Colonic mucosa (tissue), 4 donors: ENCODE measurements at regions of chr1 and their contacts with region 1.

Region 1: GRCh38 chr1:17661546-17662157 is 93.5 kb upstream of the ACTL8 start:
- DNase-seq: peak; percentile 53
- H3K4me3 ChIP-seq: no peak overlapping the region
- H3K27ac ChIP-seq: no peak overlapping the region
- H3K4me1 ChIP-seq: no peaks in the 10 kb centered on the region
- H3K27me3 ChIP-seq: no peaks in the 10 kb centered on the region
- CTCF ChIP-seq: peak; percentile 74

Region 2: GRCh38 chr1:17587989-17588685 is 73.5 kb before region 1 on chr1:
- intact Hi-C with region 1: no loop called
- DNase-seq: peak; percentile 95
- H3K4me3 ChIP-seq: no peak overlapping the region
- H3K27ac ChIP-seq: peak overlapping the region; percentile 93
- H3K4me1 ChIP-seq: peaks cover 30% of the 10 kb centered on the region
- H3K27me3 ChIP-seq: no peaks in the 10 kb centered on the region
- CTCF ChIP-seq: no peak

Region 3: DNA sequence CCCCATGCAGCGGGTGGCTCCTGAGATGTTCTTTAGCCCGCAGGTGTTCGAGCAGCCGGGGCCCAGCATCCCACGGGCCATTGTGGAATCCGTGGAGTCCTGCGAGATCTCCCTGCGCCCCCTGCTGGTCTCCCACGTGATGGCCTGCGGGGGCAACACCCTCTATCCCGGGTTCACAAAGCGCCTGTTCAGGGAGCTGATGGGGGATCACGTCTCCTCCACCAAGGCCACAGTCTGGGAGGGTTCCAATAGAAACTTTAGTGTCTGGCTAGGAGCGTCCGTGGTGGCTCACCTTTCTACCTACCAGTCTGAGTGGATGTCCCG is 164.5 kb after region 1 on chr1:
- intact Hi-C with region 1: loop called (anchors 5 kb)
- DNase-seq: peak; percentile 66
- H3K4me3 ChIP-seq: no peak overlapping the region
- H3K27ac ChIP-seq: no peak overlapping the region
- H3K4me1 ChIP-seq: no peaks in the 10 kb centered on the region
- H3K27me3 ChIP-seq: no peaks in the 10 kb centered on the region
- CTCF ChIP-seq: peak; percentile 71

Region 4: DNA sequence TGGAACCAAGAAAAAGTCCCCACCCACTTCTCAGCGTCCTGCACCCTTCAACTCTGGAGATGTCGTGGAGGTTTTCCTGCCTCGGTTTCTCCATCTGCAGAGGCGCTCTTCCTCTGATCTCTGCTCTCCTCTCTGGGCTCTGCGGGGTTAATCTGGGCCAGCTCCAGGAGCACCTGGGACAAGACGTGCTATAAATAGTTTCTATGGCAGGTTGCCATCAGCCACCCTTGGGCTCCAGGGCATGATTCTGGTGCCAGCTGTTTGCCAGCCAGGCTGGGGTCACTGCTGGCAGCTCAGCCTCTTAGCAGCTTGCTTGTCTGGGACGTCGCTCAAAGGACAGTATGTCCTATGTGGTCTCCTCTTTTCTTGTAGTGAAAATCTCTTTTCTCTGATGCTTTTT is 230.6 kb after region 1 on chr1:
- intact Hi-C with region 1: no loop called
- DNase-seq: no peak
- H3K4me3 ChIP-seq: no peak overlapping the region
- H3K27ac ChIP-seq: no peak overlapping the region
- H3K4me1 ChIP-seq: no peaks in the 10 kb centered on the region
- H3K27me3 ChIP-seq: no peaks in the 10 kb centered on the region
- CTCF ChIP-seq: no peak

Region 5: GRCh38 chr1:18091660-18092446 is 430.2 kb after region 1 on chr1:
- intact Hi-C with region 1: loop called (anchors 10 kb)
- DNase-seq: no peak
- H3K4me3 ChIP-seq: no peak overlapping the region
- H3K27ac ChIP-seq: no peak overlapping the region
- H3K4me1 ChIP-seq: no peaks in the 10 kb centered on the region
- H3K27me3 ChIP-seq: no peaks in the 10 kb centered on the region
- CTCF ChIP-seq: no peak